ENCODE measurements at regions of chr9 and their contacts with region 1.

Region 1: GRCh38 chr9:5628530-5629311 is at the start of gene RIC1:
- DNase-seq: peak; percentile 85 to 91 (median 88)
- ATAC-seq: peak; percentile 94
- H3K4me3 ChIP-seq: peak within 1 kb of the TSS; percentile 88
- H3K4me3 Mint-ChIP-seq: peak within 1 kb of the TSS; percentile 94 to 100 (median 99)
- H3K27ac ChIP-seq: peak within 1 kb of the TSS; percentile 89
- H3K27ac Mint-ChIP-seq: peak within 1 kb of the TSS; percentile 94 to 99 (median 98)
- H3K4me1 ChIP-seq: peaks cover 10 to 49% of the 10 kb centered on the region in 2 donors
- H3K4me1 Mint-ChIP-seq: peaks cover 43 to 77% (median 65%) of the 10 kb centered on the region in 7 donors
- H3K27me3 ChIP-seq: no peaks in the 10 kb centered on the region
- H3K27me3 Mint-ChIP-seq: no peaks in the 10 kb centered on the region
- total RNA-seq, gene RIC1: 20.2 to 28.2 (median 25.9) TPM

Region 2: DNA sequence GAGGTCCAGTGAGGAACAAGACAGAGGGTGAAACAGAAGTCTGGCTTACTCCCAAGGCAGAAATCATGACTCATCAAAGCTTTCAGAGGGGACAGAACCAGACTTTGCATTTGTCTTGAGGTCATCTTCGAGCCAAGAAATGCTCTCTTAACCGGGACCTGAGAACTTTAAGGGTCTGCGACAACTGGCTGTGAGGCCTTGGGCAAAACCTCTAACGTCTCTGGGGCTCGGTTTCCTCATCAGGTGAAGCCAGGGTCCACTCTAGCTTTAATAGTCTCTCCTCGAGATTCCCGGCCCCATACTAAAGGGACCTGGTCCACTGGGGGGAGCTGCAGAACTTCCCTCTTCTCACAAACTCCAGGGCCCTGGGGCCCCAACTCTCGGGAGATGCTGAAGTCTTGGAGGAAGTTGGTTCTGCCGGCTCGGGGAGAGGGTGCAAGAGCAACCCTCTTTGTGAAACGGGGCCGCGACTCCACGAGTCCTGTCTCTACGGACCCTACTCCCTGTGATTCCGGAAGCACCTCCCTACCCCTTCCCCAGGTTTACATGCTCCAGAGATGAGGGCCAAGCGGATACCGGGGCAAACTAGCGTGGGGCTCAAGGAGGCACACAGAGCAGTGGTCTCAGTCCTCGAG is 1331.5 kb before region 1 on chr9:
- CTCF ChIA-PET with region 1: no interaction called
- POLR2A ChIA-PET with region 1: no interaction called
- intact Hi-C with region 1: loop called in 1 of 2 experiments (anchors 1 kb)
- DNase-seq: peak; percentile 12 to 47 (median 29)
- ATAC-seq: peak; percentile 55
- H3K4me3 ChIP-seq: peak overlapping the region; percentile 74
- H3K4me3 Mint-ChIP-seq: peak overlapping the region; percentile 93 to 98 (median 96)
- H3K27ac ChIP-seq: peak overlapping the region; percentile 68
- H3K27ac Mint-ChIP-seq: peak overlapping the region; percentile 80 to 97 (median 88)
- H3K4me1 ChIP-seq: peaks cover 0 to 4% of the 10 kb centered on the region in 2 donors
- H3K4me1 Mint-ChIP-seq: peaks cover 15 to 34% (median 21%) of the 10 kb centered on the region in 7 donors
- H3K27me3 ChIP-seq: no peaks in the 10 kb centered on the region
- H3K27me3 Mint-ChIP-seq: peaks cover 0 to 67% (median 28%) of the 10 kb centered on the region in 5 donors

Region 3: DNA sequence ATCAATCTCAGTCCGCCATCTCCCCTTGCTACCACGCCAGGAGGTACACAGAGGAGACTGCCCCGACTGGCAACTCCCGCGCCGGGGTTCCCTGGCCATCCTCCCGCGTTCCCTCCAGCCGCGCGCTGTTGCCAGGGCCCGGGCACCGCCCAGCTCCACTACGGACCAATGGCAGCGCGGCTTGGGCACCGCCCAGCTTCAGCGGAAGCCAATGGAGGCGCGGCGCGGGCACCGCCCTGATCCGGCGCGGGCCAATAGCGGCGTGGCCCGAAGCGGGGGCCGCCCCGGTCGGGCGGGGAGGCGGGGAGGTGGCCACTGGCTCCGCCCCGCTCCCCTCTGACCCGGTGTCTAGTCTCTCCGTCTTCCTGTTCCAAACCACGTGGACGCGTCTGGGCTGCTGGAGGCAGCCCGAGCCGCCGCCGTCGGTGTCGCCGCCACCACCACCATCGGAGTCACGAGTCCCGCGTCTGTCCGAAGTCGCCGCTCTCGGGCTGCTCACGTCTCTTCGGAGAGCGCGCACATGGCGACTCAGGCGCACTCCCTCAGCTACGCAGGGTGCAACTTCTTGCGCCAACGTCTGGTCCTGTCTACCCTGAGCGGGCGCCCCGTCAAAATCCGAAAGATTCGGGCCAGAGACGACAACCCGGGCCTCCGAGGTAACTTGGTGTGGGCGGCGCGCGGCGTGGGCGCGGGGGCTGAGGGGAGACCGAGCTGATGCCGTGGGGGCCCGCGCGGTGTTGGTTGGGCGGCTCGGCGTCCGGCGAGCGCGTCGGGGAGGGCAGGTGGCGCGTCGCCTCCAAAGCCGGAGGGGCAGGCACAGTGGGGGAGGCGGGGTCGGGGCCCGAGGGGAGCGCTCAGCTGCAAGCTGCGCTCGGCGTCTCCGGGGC is 835.9 kb before region 1 on chr9 and contains the start of gene RCL1:
- CTCF ChIA-PET with region 1: no interaction called
- POLR2A ChIA-PET with region 1: interaction called, 6 read pairs
- intact Hi-C with region 1: loop called (anchors 1 kb)
- DNase-seq: peak; percentile 93 to 98 (median 97)
- ATAC-seq: peak; percentile 96
- H3K4me3 ChIP-seq: peak within 1 kb of the TSS; percentile 99
- H3K4me3 Mint-ChIP-seq: peak within 1 kb of the TSS; percentile 83 to 97 (median 94)
- H3K27ac ChIP-seq: peak within 1 kb of the TSS; percentile 80
- H3K27ac Mint-ChIP-seq: peak within 1 kb of the TSS; percentile 71 to 97 (median 94)
- H3K4me1 ChIP-seq: peaks cover 4 to 18% of the 10 kb centered on the region in 2 donors
- H3K4me1 Mint-ChIP-seq: peaks cover 21 to 56% (median 45%) of the 10 kb centered on the region in 7 donors
- H3K27me3 ChIP-seq: no peaks in the 10 kb centered on the region
- H3K27me3 Mint-ChIP-seq: peaks cover 0 to 11% (median 0%) of the 10 kb centered on the region in 5 donors
- total RNA-seq, gene RCL1: 21.5 to 39.4 (median 23.4) TPM

Region 4: GRCh38 chr9:5450359-5451091 is 178.2 kb before region 1 on chr9 and contains the start of gene CD274:
- CTCF ChIA-PET with region 1: interaction called, 5 read pairs
- POLR2A ChIA-PET with region 1: interaction called, 29 read pairs
- intact Hi-C with region 1: loop called (anchors 1 kb)
- DNase-seq: peak; percentile 61 to 89 (median 80)
- ATAC-seq: peak; percentile 95
- H3K4me3 ChIP-seq: peak within 1 kb of the TSS; percentile 78
- H3K4me3 Mint-ChIP-seq: peak within 1 kb of the TSS; percentile 92 to 98 (median 95)
- H3K27ac ChIP-seq: peak within 1 kb of the TSS; percentile 94
- H3K27ac Mint-ChIP-seq: peak within 1 kb of the TSS; percentile 97 to 99 (median 98)
- H3K4me1 ChIP-seq: peaks cover 0 to 11% of the 10 kb centered on the region in 2 donors
- H3K4me1 Mint-ChIP-seq: peaks cover 33 to 69% (median 62%) of the 10 kb centered on the region in 7 donors
- H3K27me3 ChIP-seq: no peaks in the 10 kb centered on the region
- H3K27me3 Mint-ChIP-seq: no peaks in the 10 kb centered on the region
- total RNA-seq, gene CD274: 2.9 to 38.7 (median 7.8) TPM

Region 5: DNA sequence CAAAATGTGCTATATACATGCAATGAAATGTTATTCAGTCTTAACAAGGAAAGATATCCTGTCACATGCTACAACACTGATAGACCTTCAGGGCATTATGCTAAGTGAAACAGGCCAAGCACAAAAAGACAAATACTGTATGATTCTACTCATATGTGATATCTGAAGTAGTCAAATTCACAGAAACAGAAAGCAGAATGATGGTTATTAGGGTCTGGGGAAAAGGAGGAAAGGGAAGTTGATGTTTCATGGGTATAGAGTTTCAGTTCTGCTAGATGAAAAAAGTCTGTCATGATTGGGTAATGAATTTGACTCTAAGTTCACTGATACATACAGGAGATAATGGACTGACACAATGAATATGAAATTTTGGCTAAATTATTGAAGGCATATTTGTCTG is 11.0 kb before region 1 on chr9:
- CTCF ChIA-PET with region 1: interaction called, 3 read pairs
- POLR2A ChIA-PET with region 1: interaction called, 9 read pairs
- intact Hi-C with region 1: loop called in 1 of 2 experiments (anchors 1 kb)
- DNase-seq: no peak
- ATAC-seq: peak; percentile 64
- H3K4me3 ChIP-seq: no peak overlapping the region
- H3K4me3 Mint-ChIP-seq: peak overlapping the region in 5 of 10 donors; percentile 21 to 62 (median 36)
- H3K27ac ChIP-seq: no peak overlapping the region
- H3K27ac Mint-ChIP-seq: peak overlapping the region in 6 of 9 donors; percentile 2 to 74 (median 21)
- H3K4me1 ChIP-seq: peaks cover 0 to 12% of the 10 kb centered on the region in 2 donors
- H3K4me1 Mint-ChIP-seq: peaks cover 27 to 60% (median 40%) of the 10 kb centered on the region in 7 donors
- H3K27me3 ChIP-seq: no peaks in the 10 kb centered on the region
- H3K27me3 Mint-ChIP-seq: no peaks in the 10 kb centered on the region

Region 6: DNA sequence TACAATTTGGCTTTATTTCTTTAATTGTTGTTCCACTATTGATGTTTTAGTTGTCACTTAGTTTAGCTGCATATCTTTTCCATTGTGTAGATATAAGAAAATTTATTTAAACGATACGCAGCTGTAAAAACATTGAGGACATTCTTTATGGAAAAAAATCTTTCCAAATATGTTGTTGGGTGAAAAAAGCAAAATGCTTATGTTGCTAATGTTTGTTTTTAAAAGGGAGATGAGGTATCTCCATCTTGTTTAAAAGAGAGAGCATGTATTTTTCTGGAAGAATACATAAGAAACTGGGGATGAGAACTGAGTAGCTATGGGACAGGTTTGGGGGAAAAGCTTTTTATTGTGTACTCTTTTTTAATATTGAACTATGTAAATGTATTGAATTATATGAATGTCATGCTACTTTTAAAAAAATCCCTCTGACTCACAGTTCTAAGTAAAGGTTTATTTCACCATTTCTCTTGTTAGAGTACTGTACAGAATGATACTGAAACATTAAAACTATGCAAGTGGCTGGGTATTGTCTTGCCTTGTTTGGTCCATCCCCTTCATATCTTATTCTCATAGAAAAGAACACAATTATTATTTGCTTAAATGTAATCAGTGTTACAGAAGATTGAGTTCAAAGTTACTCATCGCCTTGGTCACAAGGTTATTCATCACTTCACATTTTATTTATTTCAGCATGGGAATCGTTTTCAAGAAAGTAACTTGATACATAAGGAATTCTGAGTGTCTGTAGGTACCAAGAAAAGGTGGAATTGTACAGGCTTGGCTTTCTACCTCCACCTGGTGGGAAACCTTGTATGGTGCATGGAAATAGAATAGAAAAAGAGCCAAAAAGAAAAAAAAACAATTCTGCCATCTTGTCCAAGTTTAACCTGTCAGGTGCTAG is 86.0 kb after region 1 on chr9:
- CTCF ChIA-PET with region 1: no interaction called
- POLR2A ChIA-PET with region 1: interaction called, 3 read pairs
- intact Hi-C with region 1: loop called (anchors 2 to 5 kb)
- DNase-seq: peak in 2 of 9 donors; percentile 1 to 7
- ATAC-seq: no peak
- H3K4me3 ChIP-seq: no peak overlapping the region
- H3K4me3 Mint-ChIP-seq: no peak overlapping the region
- H3K27ac ChIP-seq: no peak overlapping the region
- H3K27ac Mint-ChIP-seq: no peak overlapping the region
- H3K4me1 ChIP-seq: no peaks in the 10 kb centered on the region
- H3K4me1 Mint-ChIP-seq: peaks cover 0 to 17% (median 3%) of the 10 kb centered on the region in 7 donors
- H3K27me3 ChIP-seq: no peaks in the 10 kb centered on the region
- H3K27me3 Mint-ChIP-seq: no peaks in the 10 kb centered on the region

Region 7: GRCh38 chr9:6008169-6008979 is 379.7 kb after region 1 on chr9:
- CTCF ChIA-PET with region 1: no interaction called
- POLR2A ChIA-PET with region 1: interaction called, 5 read pairs
- intact Hi-C with region 1: loop called (anchors 1 kb)
- DNase-seq: peak; percentile 79 to 98 (median 93)
- ATAC-seq: peak; percentile 84
- H3K4me3 ChIP-seq: peak overlapping the region; percentile 75
- H3K4me3 Mint-ChIP-seq: peak overlapping the region; percentile 74 to 99 (median 94)
- H3K27ac ChIP-seq: peak overlapping the region; percentile 97
- H3K27ac Mint-ChIP-seq: peak overlapping the region; percentile 83 to 97 (median 91)
- H3K4me1 ChIP-seq: peaks cover 20 to 36% of the 10 kb centered on the region in 2 donors
- H3K4me1 Mint-ChIP-seq: peaks cover 26 to 75% (median 65%) of the 10 kb centered on the region in 7 donors
- H3K27me3 ChIP-seq: no peaks in the 10 kb centered on the region
- H3K27me3 Mint-ChIP-seq: no peaks in the 10 kb centered on the region